CD4-positive, alpha-beta memory T cell (primary cell): ENCODE measurements at regions of chr6 and their contacts with region 1.

Region 1: DNA sequence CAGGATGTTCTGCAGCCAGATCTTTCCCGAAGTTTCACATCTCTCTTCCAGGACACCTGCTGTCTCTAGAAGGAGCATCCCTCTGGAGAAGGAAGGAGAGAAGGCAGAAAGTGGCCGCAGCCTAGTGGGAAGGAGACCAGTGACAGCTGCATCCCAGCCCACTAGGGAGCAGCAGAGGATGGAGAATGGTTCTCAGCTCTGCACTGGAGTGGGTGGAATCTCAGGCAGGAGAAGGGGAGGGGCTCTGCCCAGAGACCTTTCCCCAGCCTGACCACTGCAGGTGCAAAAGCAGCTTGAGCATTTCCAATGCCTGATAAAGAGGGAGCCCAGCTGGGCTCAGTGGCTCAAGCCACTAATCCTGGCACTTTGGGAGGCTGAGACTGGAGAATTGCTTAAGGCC is 32.3 kb downstream of the NCR2 start:
- DNase-seq: no peak
- H3K4me3 ChIP-seq: no peak overlapping the region
- H3K4me3 Mint-ChIP-seq: no peak overlapping the region
- H3K27ac ChIP-seq: no peak overlapping the region
- H3K27ac Mint-ChIP-seq: peak overlapping the region in 1 of 7 donors; percentile 8
- H3K4me1 ChIP-seq: peaks cover 19% of the 10 kb centered on the region
- H3K4me1 Mint-ChIP-seq: peaks cover 17 to 27% (median 21%) of the 10 kb centered on the region in 4 donors
- H3K27me3 ChIP-seq: peaks cover 29% of the 10 kb centered on the region
- H3K27me3 Mint-ChIP-seq: peaks cover 38 to 42% of the 10 kb centered on the region in 2 donors

Region 2: GRCh38 chr6:41334482-41335040 is 33.1 kb before region 1 on chr6:
- CTCF ChIA-PET with region 1: interaction called, 14 read pairs
- POLR2A ChIA-PET with region 1: no interaction called
- intact Hi-C with region 1: no loop called
- DNase-seq: no peak
- H3K4me3 ChIP-seq: no peak overlapping the region
- H3K4me3 Mint-ChIP-seq: peak overlapping the region in 4 of 8 donors; percentile 11 to 67 (median 58)
- H3K27ac ChIP-seq: no peak overlapping the region
- H3K27ac Mint-ChIP-seq: peak overlapping the region; percentile 51 to 97 (median 89)
- H3K4me1 ChIP-seq: peaks cover 31% of the 10 kb centered on the region
- H3K4me1 Mint-ChIP-seq: peaks cover 8 to 38% (median 20%) of the 10 kb centered on the region in 4 donors
- H3K27me3 ChIP-seq: no peaks in the 10 kb centered on the region
- H3K27me3 Mint-ChIP-seq: peaks cover 0 to 2% of the 10 kb centered on the region in 2 donors